ENCODE measurements at regions of chr13 and their contacts with region 1.

Region 1: GRCh38 chr13:68304286-68304893 is 1074.3 kb upstream of the PCDH9 start:
- DNase-seq: peak; percentile 36
- H3K4me3 ChIP-seq: no peak overlapping the region
- H3K27ac ChIP-seq: no peak overlapping the region
- H3K4me1 ChIP-seq: no peaks in the 10 kb centered on the region; a peak in 1 of 4 replicates
- H3K27me3 ChIP-seq: no peaks in the 10 kb centered on the region
- CTCF ChIP-seq: peak; percentile 82
- EP300 ChIP-seq: no peak
- RAD21 ChIP-seq: peak; percentile 77

Region 2: DNA sequence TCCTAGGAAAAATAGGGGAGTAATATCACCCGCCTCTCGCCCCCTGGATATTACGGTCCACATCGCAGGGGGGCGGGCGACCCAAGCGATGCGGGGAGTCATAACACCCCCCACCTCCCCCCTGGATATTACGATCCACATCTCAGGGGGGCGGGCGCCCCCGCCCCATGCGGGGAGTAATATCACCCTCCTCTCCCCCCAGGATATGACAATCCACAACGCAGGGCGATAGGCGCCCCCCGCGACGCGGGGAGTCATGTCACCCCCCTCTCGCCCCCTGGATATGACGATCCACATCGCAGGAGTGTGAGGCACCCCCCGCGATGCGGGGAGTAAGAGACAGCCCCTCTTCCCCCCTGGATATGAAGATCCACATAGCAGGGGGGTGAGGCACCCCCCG is 389.9 kb before region 1 on chr13:
- CTCF ChIA-PET with region 1: no interaction called
- POLR2A ChIA-PET with region 1: no interaction called
- DNase-seq: no peak
- H3K4me3 ChIP-seq: no peak overlapping the region
- H3K27ac ChIP-seq: no peak overlapping the region
- H3K4me1 ChIP-seq: no peaks in the 10 kb centered on the region
- H3K27me3 ChIP-seq: no peaks in the 10 kb centered on the region
- CTCF ChIP-seq: no peak
- EP300 ChIP-seq: no peak
- RAD21 ChIP-seq: no peak

Region 3: GRCh38 chr13:68290751-68291150 is 13.6 kb before region 1 on chr13:
- CTCF ChIA-PET with region 1: interaction called, 13 read pairs
- POLR2A ChIA-PET with region 1: no interaction called
- DNase-seq: no peak
- H3K4me3 ChIP-seq: no peak overlapping the region
- H3K27ac ChIP-seq: no peak overlapping the region
- H3K4me1 ChIP-seq: no peaks in the 10 kb centered on the region; a peak in 1 of 4 replicates
- H3K27me3 ChIP-seq: no peaks in the 10 kb centered on the region
- CTCF ChIP-seq: no peak
- EP300 ChIP-seq: no peak
- RAD21 ChIP-seq: peak; percentile 14; the same call in 1 of the 2 replicates